ENCODE measurements at regions of chr12 and their contacts with region 1.

Region 1: GRCh38 chr12:95623585-95624042 is 72.3 kb upstream of the USP44 start:
- DNase-seq: no peak
- ATAC-seq: peak; percentile 34
- H3K4me3 Mint-ChIP-seq: no peak overlapping the region
- H3K27ac Mint-ChIP-seq: no peak overlapping the region
- H3K4me1 Mint-ChIP-seq: peaks cover 9% of the 10 kb centered on the region
- H3K27me3 Mint-ChIP-seq: no peaks in the 10 kb centered on the region
- CTCF ChIP-seq: no peak

Region 2: DNA sequence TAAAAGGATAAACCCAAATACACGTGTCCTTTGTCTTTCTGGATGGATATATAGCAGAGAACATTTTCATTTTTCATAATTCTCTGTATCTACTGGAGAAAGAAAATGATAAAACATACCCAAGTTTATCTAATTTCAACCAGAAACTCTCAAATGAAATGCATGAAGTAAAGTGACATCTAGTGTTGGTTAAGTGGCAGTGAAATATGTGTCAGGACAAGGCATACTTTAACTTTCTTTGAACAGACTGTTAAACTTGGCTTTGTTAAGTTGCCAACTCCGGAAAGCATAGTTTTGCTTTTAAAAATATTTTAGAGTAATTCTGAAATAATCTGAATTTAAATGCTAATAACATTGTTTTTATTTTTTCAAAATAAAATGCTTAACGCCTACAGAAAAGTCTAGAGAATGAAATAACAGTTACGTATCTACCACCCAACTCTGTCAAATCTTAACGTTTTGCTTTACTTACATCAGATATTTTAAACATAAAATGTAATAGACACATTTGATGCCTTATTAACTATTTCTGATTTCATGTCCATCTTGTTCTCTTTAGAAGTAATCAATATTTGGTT is 192.1 kb after region 1 on chr12:
- CTCF ChIA-PET with region 1: no interaction called
- POLR2A ChIA-PET with region 1: no interaction called
- intact Hi-C with region 1: loop called (anchors 2 kb)
- DNase-seq: no peak
- ATAC-seq: no peak
- H3K4me3 Mint-ChIP-seq: no peak overlapping the region
- H3K27ac Mint-ChIP-seq: no peak overlapping the region
- H3K4me1 Mint-ChIP-seq: no peaks in the 10 kb centered on the region
- H3K27me3 Mint-ChIP-seq: peaks cover 12% of the 10 kb centered on the region
- CTCF ChIP-seq: no peak

Measured in activated B cell treated with CpG ODN at 0.5 μM for 24 hours (primary cell).